ENCODE measurements at regions of chr12 and their contacts with region 1.

Region 1: DNA sequence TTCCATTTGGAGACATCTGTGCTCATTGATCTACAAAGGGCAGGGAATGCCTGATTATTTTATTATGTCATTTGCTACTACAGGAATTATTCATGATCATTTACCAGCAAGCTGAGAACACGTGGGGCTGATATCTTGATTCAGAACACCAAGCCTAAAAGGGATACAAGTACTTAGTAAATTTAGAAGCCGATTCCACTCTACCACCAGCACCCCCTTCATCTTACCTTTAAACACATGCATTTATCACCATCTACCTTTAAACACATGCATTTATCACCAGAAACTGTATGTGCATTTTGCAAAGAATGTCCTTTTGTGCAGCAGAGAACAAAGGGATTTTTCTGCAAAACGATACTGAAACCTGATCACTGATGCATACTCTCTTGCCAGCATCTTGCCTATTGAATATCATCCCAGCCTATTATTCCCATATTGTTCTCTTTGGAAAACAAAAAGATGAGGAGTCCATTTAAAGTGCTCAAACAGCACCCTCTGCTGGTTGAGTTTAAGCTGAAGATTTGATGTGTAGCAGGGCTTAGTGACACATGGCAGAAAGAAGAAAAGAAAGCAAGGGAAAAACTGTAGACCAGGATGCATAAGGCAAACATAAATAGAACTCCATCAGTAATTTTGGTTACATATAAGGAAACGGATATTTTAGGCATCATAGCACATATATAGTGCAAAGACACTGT is 132.6 kb upstream of the PLEKHG7 start:
- DNase-seq: peak; percentile 58
- ATAC-seq: peak; percentile 92
- H3K4me3 Mint-ChIP-seq: no peak overlapping the region
- H3K27ac Mint-ChIP-seq: no peak overlapping the region
- H3K4me1 Mint-ChIP-seq: peaks cover 32% of the 10 kb centered on the region
- H3K27me3 Mint-ChIP-seq: no peaks in the 10 kb centered on the region

Region 2: GRCh38 chr12:91361864-91362263 is 1208.3 kb before region 1 on chr12:
- CTCF ChIA-PET with region 1: no interaction called
- POLR2A ChIA-PET with region 1: no interaction called
- intact Hi-C with region 1: loop called (anchors 5 kb)
- DNase-seq: no peak
- ATAC-seq: no peak
- H3K4me3 Mint-ChIP-seq: no peak overlapping the region
- H3K27ac Mint-ChIP-seq: no peak overlapping the region
- H3K4me1 Mint-ChIP-seq: no peaks in the 10 kb centered on the region
- H3K27me3 Mint-ChIP-seq: no peaks in the 10 kb centered on the region

Region 3: GRCh38 chr12:91811481-91812287 is 758.5 kb before region 1 on chr12:
- CTCF ChIA-PET with region 1: no interaction called
- POLR2A ChIA-PET with region 1: no interaction called
- intact Hi-C with region 1: loop called (anchors 2 to 5 kb)
- DNase-seq: peak; percentile 82
- ATAC-seq: peak; percentile 68
- H3K4me3 Mint-ChIP-seq: no peak overlapping the region
- H3K27ac Mint-ChIP-seq: peak overlapping the region; percentile 8
- H3K4me1 Mint-ChIP-seq: peaks cover 17% of the 10 kb centered on the region
- H3K27me3 Mint-ChIP-seq: no peaks in the 10 kb centered on the region

Region 4: GRCh38 chr12:92208613-92209121 is 361.5 kb before region 1 on chr12:
- CTCF ChIA-PET with region 1: no interaction called
- POLR2A ChIA-PET with region 1: no interaction called
- intact Hi-C with region 1: loop called (anchors 2 to 5 kb)
- DNase-seq: peak; percentile 40
- ATAC-seq: peak; percentile 77
- H3K4me3 Mint-ChIP-seq: peak overlapping the region; percentile 67
- H3K27ac Mint-ChIP-seq: peak overlapping the region; percentile 81
- H3K4me1 Mint-ChIP-seq: peaks cover 32% of the 10 kb centered on the region
- H3K27me3 Mint-ChIP-seq: no peaks in the 10 kb centered on the region

Region 5: GRCh38 chr12:92396647-92397252 is 173.5 kb before region 1 on chr12:
- CTCF ChIA-PET with region 1: interaction called, 3 read pairs
- POLR2A ChIA-PET with region 1: no interaction called
- intact Hi-C with region 1: loop called (anchors 1 kb)
- DNase-seq: peak; percentile 46
- ATAC-seq: peak; percentile 44
- H3K4me3 Mint-ChIP-seq: no peak overlapping the region
- H3K27ac Mint-ChIP-seq: peak overlapping the region; percentile 95
- H3K4me1 Mint-ChIP-seq: peaks cover 93% of the 10 kb centered on the region
- H3K27me3 Mint-ChIP-seq: no peaks in the 10 kb centered on the region

Region 6: DNA sequence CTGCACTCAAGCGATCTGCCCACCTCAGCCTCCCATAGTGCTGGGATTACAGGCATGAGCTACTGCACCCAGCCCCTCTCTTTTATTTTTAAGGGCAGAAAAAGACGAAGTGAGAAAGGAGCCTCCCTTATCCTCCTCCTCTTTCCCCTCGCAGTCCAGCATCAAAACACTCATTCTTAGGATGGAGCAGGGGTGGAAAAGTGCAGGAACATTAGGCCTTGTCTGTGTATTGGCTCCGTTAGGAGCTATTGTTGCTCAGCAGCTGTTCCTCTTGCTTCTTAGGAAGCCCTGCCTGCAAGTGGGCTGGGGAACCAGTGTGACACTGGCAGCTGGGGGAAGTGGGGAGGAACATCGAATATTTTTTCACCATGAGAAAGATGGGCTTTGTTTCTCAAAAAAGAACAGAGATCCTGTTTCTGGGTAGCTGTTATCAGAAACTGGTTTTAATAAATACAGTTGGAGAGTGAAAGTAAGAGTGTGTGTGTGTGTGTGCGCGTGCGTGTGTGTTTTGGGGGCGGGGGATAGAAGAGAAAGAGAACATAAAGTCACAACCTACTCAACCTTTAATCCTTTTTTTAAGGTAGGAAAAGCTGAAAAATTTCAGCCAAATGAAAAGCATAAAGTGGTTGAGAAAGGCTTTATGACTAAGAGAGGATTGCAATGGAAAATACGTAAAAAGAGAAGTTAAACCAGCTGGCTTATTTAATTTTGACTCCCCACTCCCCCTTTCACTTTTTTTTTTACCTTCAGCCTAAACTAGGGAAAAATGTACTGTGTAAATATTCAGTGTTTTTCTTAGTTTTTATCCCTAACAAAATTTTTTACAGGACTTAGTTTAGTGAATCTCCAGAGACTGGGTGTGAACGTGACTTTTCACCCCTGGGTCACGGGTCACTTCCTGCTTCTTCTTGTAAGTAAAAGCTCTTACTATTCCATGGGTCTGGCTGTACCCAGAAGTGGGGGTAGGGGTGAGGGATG is 64.7 kb before region 1 on chr12:
- CTCF ChIA-PET with region 1: interaction called, 50 read pairs
- POLR2A ChIA-PET with region 1: no interaction called
- intact Hi-C with region 1: loop called (anchors 1 kb)
- DNase-seq: peak; percentile 77
- ATAC-seq: peak; percentile 56
- H3K4me3 Mint-ChIP-seq: peak overlapping the region; percentile 72
- H3K27ac Mint-ChIP-seq: peak overlapping the region; percentile 99
- H3K4me1 Mint-ChIP-seq: peaks cover 50% of the 10 kb centered on the region
- H3K27me3 Mint-ChIP-seq: no peaks in the 10 kb centered on the region

Region 7: DNA sequence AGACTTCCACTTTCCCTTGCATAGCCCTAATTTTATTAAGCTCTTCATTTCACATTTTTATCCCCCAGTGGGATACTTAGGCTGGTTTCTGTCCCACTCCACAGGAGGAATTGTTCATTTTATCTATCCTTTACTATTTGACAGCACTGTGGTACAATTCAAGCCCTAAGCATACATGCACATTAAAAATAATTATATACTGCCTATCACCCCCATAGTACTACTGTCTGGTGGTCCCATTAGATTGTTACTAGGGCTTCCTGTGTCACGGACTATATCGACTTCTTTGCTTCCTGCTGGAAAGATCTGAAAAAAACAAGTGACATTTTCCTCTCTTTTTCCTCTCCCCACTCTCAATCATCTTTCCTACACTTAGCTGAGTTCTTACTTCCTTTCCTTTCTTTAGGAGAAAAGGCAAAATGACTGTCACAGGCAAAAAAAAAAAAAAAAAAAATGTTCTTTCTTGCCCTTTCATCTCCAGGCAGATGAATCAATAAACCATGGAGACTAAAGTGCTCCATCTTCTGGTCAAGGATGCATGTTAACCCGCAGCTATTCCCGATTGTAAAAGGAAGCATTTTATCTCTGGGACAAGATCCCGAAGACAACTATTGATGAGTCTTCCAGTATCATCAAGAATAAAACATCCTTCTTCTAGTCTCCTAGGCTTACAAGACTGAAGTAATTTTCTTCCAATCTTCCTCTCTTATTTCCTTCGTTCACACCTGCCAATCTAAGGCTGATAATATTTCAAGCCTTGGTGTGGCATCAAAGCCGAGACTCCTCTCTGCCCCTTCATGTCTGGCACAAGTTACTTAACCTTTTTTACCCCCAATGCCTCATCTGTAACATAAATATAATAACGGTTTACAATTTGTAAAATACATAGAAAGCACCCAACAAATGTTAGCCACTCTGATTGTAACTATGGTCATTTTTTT is 38.2 kb after region 1 on chr12:
- CTCF ChIA-PET with region 1: interaction called, 4 read pairs
- POLR2A ChIA-PET with region 1: no interaction called
- intact Hi-C with region 1: loop called in 1 of 2 experiments (anchors 5 kb)
- DNase-seq: no peak
- ATAC-seq: no peak
- H3K4me3 Mint-ChIP-seq: peak overlapping the region; percentile 5
- H3K27ac Mint-ChIP-seq: peak overlapping the region; percentile 58
- H3K4me1 Mint-ChIP-seq: peaks cover 30% of the 10 kb centered on the region
- H3K27me3 Mint-ChIP-seq: no peaks in the 10 kb centered on the region